ENCODE measurements at regions of chr3 and their contacts with region 1.

Region 1: GRCh38 chr3:83092521-83093221 is 1331.2 kb upstream of the GBE1 start:
- DNase-seq: no peak
- H3K4me3 ChIP-seq: no peak overlapping the region
- H3K27ac ChIP-seq: no peak overlapping the region
- H3K4me1 ChIP-seq: no peaks in the 10 kb centered on the region
- H3K27me3 ChIP-seq: no peaks in the 10 kb centered on the region
- CTCF ChIP-seq: no peak
- POLR2A ChIP-seq: no peak

Region 2: GRCh38 chr3:82137861-82138260 is 954.8 kb before region 1 on chr3:
- intact Hi-C with region 1: loop called (anchors 5 kb)
- DNase-seq: no peak
- H3K4me3 ChIP-seq: no peak overlapping the region
- H3K27ac ChIP-seq: no peak overlapping the region
- H3K4me1 ChIP-seq: no peaks in the 10 kb centered on the region
- H3K27me3 ChIP-seq: no peaks in the 10 kb centered on the region
- CTCF ChIP-seq: no peak
- POLR2A ChIP-seq: no peak

Region 3: GRCh38 chr3:83140983-83141382 is 48.3 kb after region 1 on chr3:
- intact Hi-C with region 1: no loop called
- DNase-seq: no peak
- H3K4me3 ChIP-seq: no peak overlapping the region
- H3K27ac ChIP-seq: no peak overlapping the region
- H3K4me1 ChIP-seq: no peaks in the 10 kb centered on the region
- H3K27me3 ChIP-seq: no peaks in the 10 kb centered on the region
- CTCF ChIP-seq: no peak
- POLR2A ChIP-seq: no peak

Measured in breast epithelium (tissue), 4 donors.